ENCODE measurements at regions of chr1 and their contacts with region 1.

Region 1: DNA sequence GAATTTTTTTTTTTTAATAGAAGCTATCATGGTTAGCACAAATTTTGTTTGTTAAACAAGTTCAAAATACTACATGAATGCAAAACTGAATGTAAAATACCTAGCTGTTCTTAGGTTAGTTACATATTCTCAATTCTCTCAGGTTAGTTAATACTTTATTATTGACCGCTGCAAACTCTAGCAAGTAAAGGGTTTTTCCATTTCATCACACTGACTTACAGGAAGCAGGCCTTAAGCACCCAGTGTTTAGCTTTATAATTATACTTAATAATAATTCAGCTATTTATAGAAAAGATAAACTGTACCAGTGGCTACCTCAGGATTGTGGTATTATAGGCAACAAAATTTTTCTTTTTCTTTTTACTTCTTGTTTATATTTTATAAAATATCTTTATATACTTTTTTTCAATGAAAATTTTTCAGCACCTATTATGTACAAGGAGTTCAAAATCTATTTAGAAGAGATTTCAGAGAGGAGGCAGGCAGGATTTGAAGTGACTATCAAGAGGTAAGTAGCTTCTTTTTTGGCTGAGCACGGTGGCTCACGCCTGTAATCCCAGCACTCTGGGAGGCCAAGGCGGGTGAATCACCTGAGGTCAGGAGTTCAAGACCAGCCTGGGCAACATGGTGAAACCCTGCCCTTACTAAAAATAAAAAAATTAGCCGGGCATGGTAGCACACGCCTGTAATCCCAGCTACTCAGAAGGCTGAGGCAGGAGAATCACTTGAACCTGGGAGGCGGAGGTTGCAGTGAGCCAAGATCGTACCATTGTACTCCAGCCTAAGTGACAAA is 17.9 kb downstream of the PLPP3 start:
- DNase-seq: no peak
- ATAC-seq: no peak
- H3K4me3 ChIP-seq: no peak overlapping the region
- H3K27ac ChIP-seq: no peak overlapping the region
- H3K4me1 ChIP-seq: peaks cover 6% of the 10 kb centered on the region
- H3K27me3 ChIP-seq: no peaks in the 10 kb centered on the region
- CTCF ChIP-seq: no peak
- POLR2A ChIP-seq: no peak
- RAD21 ChIP-seq: no peak

Region 2: DNA sequence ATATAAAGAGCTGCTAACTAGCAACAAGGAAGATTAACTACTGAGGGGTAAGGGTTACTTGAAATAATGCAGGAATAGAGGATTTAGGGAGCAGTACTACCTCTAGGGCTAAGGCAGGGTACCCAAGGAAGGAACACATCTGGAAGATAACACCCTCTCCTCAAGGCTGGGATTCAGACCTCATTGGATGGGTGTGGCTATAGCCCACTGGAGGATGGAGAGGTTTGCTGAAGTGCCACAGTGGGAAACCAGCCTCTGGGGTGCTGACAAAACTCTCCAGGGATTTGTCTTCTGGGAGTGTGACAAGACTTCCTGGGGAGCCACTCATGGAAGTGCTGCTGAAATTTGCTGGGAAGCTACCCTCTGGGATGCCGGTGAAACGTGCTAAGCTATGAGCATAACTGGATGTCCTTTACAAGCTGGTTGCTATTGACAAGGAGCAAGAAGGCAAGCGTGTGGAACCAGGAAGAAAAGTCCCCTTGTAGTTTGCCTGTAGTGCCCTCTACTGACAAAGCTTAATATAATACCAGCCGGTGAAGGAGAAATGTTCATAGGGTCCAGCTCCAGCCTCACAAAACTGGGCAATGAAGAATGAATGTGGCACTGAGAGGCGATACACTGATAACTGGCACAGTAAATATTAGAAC is 1223.5 kb before region 1 on chr1:
- CTCF ChIA-PET with region 1: no interaction called
- POLR2A ChIA-PET with region 1: interaction called, 18 read pairs
- dilution Hi-C with region 1: no loop called
- in situ Hi-C with region 1: no loop called
- intact Hi-C with region 1: no loop called
- DNase-seq: peak; percentile 79
- ATAC-seq: peak; percentile 96
- H3K4me3 ChIP-seq: no peak overlapping the region
- H3K27ac ChIP-seq: no peak overlapping the region
- H3K4me1 ChIP-seq: no peaks in the 10 kb centered on the region
- H3K27me3 ChIP-seq: no peaks in the 10 kb centered on the region
- CTCF ChIP-seq: peak; percentile 77
- POLR2A ChIP-seq: no peak
- RAD21 ChIP-seq: peak; percentile 88

Region 3: GRCh38 chr1:55611123-55611522 is 950.3 kb before region 1 on chr1:
- CTCF ChIA-PET with region 1: no interaction called
- POLR2A ChIA-PET with region 1: interaction called, 10 read pairs
- dilution Hi-C with region 1: no loop called
- in situ Hi-C with region 1: no loop called
- intact Hi-C with region 1: no loop called
- DNase-seq: no peak
- ATAC-seq: peak; percentile 56
- H3K4me3 ChIP-seq: no peak overlapping the region
- H3K27ac ChIP-seq: peak overlapping the region; percentile 54; the same call in 1 of the 2 replicates
- H3K4me1 ChIP-seq: peaks cover 9% of the 10 kb centered on the region
- H3K27me3 ChIP-seq: no peaks in the 10 kb centered on the region
- CTCF ChIP-seq: no peak
- POLR2A ChIP-seq: no peak
- RAD21 ChIP-seq: no peak

Region 4: GRCh38 chr1:56573311-56573710 is 11.9 kb after region 1 on chr1:
- CTCF ChIA-PET with region 1: no interaction called
- POLR2A ChIA-PET with region 1: no interaction called
- dilution Hi-C with region 1: no loop called
- in situ Hi-C with region 1: no loop called
- intact Hi-C with region 1: no loop called
- DNase-seq: no peak
- ATAC-seq: no peak
- H3K4me3 ChIP-seq: no peak overlapping the region; the same call in 1 of the 2 replicates
- H3K27ac ChIP-seq: no peak overlapping the region
- H3K4me1 ChIP-seq: peaks cover 21% of the 10 kb centered on the region
- H3K27me3 ChIP-seq: no peaks in the 10 kb centered on the region
- CTCF ChIP-seq: no peak
- POLR2A ChIP-seq: no peak
- RAD21 ChIP-seq: no peak

Region 5: GRCh38 chr1:56854521-56855099 is 293.2 kb after region 1 on chr1 and contains the start of gene C8A:
- CTCF ChIA-PET with region 1: no interaction called
- POLR2A ChIA-PET with region 1: no interaction called
- dilution Hi-C with region 1: no loop called
- in situ Hi-C with region 1: no loop called
- intact Hi-C with region 1: no loop called
- DNase-seq: no peak
- ATAC-seq: no peak
- H3K4me3 ChIP-seq: no peak within 1 kb of the TSS
- H3K27ac ChIP-seq: no peak within 1 kb of the TSS
- H3K4me1 ChIP-seq: no peaks in the 10 kb centered on the region
- H3K27me3 ChIP-seq: no peaks in the 10 kb centered on the region
- CTCF ChIP-seq: no peak
- POLR2A ChIP-seq: no peak
- RAD21 ChIP-seq: no peak
- total RNA-seq, gene C8A: not detected in 2 replicates

Measured in IMR-90 (cell line).